ENCODE measurements at regions of chr3 and their contacts with region 1.

Region 1: DNA sequence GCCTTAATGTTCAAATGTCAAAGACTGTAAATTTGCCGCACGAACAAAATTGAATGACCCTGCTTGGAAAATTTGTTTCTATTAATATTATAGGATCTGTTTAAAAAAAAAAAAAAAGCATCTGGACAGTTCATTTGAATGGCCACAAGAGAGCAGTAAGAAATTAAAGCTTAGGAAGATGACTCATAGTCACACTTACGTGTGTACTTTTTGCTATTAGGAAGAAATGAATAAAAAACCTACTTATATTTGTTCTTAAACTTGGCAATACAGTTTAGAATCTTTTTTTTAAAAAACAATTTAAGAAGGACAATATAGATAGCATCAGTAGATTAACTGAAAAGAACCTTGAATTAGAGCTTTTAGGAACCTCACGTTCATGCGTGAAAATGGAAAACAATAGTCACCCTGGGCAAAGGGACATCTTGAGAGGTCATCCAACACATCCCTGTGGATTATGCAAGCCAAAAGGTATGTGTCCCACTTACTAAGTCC is 621.8 kb downstream of the MECOM start:
- DNase-seq: no peak
- H3K4me3 ChIP-seq: no peak overlapping the region
- H3K27ac ChIP-seq: peak overlapping the region; percentile 12
- H3K4me1 ChIP-seq: peaks cover 3% of the 10 kb centered on the region
- H3K27me3 ChIP-seq: no peaks in the 10 kb centered on the region
- CTCF ChIP-seq: peak; percentile 72

Region 2: DNA sequence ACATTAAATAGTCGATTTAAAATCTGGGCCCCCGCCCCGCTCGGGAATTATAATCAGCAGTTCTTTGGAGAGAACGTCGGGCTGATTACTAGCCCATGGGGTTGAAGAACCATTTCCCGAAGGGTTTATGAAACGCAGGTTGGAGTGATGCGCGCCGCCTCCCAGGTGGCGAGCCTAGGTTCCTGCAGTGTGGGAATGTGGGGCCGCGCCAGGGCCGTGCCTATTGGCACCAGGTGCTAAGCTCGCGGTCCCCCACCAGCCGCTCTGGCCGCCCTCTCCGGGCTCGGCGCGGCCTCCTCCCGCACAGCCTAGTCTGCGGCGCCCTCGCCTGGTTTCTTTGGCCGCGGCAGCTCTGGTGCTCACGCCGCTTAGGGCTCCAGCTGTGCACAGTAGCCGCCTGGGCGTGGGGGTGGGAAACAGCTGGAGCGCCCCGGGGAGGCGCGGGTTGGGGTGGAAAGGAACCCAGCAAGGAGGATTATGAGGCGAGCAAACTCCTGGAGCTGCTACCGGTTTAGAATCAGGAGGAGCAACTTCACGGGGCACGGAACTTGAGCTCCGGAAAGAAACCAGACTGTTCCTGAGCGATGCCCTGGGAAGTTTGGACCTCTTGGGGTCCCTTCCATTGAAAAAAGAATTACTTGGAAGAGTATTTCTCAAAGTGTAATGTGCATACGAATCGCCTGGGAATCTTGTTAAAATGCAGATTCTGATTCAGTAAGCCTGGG is 627.4 kb after region 1 on chr3:
- intact Hi-C with region 1: loop called (anchors 10 kb)
- DNase-seq: peak; percentile 76
- H3K4me3 ChIP-seq: peak overlapping the region; percentile 70
- H3K27ac ChIP-seq: peak overlapping the region; percentile 71
- H3K4me1 ChIP-seq: peaks cover 21% of the 10 kb centered on the region
- H3K27me3 ChIP-seq: peaks cover 91% of the 10 kb centered on the region
- CTCF ChIP-seq: peak; percentile 89

Measured in left ventricle myocardium inferior (tissue), 1 donor.